CD4-positive, alpha-beta T cell (primary cell): ENCODE measurements at regions of chr10 and their contacts with region 1.

Region 1: GRCh38 chr10:68901104-68901927 is at the start of gene DDX50:
- DNase-seq: peak; percentile 87 to 98 (median 92)
- ATAC-seq: peak; percentile 97
- H3K4me3 ChIP-seq: peak within 1 kb of the TSS; percentile 99
- H3K4me3 Mint-ChIP-seq: peak within 1 kb of the TSS; percentile 99
- H3K27ac ChIP-seq: peak within 1 kb of the TSS; percentile 100
- H3K27ac Mint-ChIP-seq: peak within 1 kb of the TSS; percentile 100
- H3K4me1 ChIP-seq: peaks cover 41% of the 10 kb centered on the region
- H3K4me1 Mint-ChIP-seq: peaks cover 61% of the 10 kb centered on the region
- H3K27me3 ChIP-seq: no peaks in the 10 kb centered on the region
- H3K27me3 Mint-ChIP-seq: no peaks in the 10 kb centered on the region
- CTCF ChIP-seq: no peak
- total RNA-seq, gene DDX50: 46.8 to 47.5 TPM

Region 2: DNA sequence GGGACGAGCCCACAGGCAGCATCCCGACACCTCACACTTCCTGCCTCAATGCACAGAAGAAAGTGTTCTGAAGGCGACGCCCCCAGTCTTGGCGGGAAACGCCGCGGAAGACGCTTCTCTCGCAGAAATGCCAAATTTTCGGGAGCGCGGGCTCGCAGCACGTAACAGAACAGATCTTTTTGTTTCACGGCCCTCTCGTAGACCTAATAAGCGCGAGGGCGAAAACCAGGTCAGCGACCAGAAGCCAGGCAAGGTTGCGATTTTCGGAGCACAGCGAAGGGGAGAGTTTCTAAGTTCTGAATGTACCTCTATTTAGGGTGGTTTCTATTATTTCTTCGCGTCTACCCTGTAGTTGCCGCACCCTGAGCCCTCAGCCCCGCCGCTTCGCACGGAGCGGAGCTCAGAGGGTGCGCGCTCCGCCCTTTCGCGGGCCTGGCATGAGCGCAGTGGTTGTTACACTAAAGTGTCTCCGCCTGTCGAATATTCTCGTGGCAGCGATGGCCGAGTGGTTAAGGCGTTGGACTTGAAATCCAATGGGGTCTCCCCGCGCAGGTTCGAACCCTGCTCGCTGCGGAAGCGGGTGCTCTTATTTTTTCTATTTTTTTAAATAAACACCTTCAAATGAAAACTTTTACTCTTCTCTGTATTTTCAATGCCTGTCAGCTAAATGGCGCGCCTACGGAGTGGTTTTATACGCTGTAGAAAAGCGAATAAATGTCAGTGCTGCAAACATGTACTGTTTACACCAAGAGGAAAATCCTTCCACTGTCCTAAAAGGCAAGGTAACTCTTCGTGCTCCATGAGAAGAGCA is 1137.1 kb before region 1 on chr10:
- CTCF ChIA-PET with region 1: no interaction called
- POLR2A ChIA-PET with region 1: no interaction called
- intact Hi-C with region 1: loop called in 1 of 2 experiments (anchors 10 kb)
- DNase-seq: peak; percentile 94 to 100 (median 97)
- ATAC-seq: peak; percentile 80
- H3K4me3 ChIP-seq: peak overlapping the region; percentile 86
- H3K4me3 Mint-ChIP-seq: peak overlapping the region; percentile 95
- H3K27ac ChIP-seq: peak overlapping the region; percentile 88 to 91
- H3K27ac Mint-ChIP-seq: peak overlapping the region; percentile 100
- H3K4me1 ChIP-seq: peaks cover 10% of the 10 kb centered on the region
- H3K4me1 Mint-ChIP-seq: peaks cover 27% of the 10 kb centered on the region
- H3K27me3 ChIP-seq: no peaks in the 10 kb centered on the region
- H3K27me3 Mint-ChIP-seq: peaks cover 17% of the 10 kb centered on the region
- CTCF ChIP-seq: no peak

Region 3: GRCh38 chr10:68208424-68209042 is 692.8 kb before region 1 on chr10:
- CTCF ChIA-PET with region 1: no interaction called
- POLR2A ChIA-PET with region 1: no interaction called
- intact Hi-C with region 1: loop called in 1 of 2 experiments (anchors 2 kb)
- DNase-seq: peak in 2 of 14 experiments; percentile 11 to 22
- ATAC-seq: no peak
- H3K4me3 ChIP-seq: no peak overlapping the region
- H3K4me3 Mint-ChIP-seq: no peak overlapping the region
- H3K27ac ChIP-seq: no peak overlapping the region
- H3K27ac Mint-ChIP-seq: no peak overlapping the region
- H3K4me1 ChIP-seq: no peaks in the 10 kb centered on the region
- H3K4me1 Mint-ChIP-seq: no peaks in the 10 kb centered on the region
- H3K27me3 ChIP-seq: peaks cover 0 to 9% of the 10 kb centered on the region in 2 experiments
- H3K27me3 Mint-ChIP-seq: peaks cover 25% of the 10 kb centered on the region
- CTCF ChIP-seq: no peak

Region 4: GRCh38 chr10:68526626-68527307 is 374.5 kb before region 1 on chr10:
- CTCF ChIA-PET with region 1: no interaction called
- POLR2A ChIA-PET with region 1: no interaction called
- intact Hi-C with region 1: loop called in 1 of 2 experiments (anchors 10 kb)
- DNase-seq: no peak
- ATAC-seq: peak; percentile 10
- H3K4me3 ChIP-seq: peak overlapping the region; percentile 68
- H3K4me3 Mint-ChIP-seq: peak overlapping the region; percentile 88
- H3K27ac ChIP-seq: peak overlapping the region; percentile 82 to 90
- H3K27ac Mint-ChIP-seq: peak overlapping the region; percentile 96
- H3K4me1 ChIP-seq: peaks cover 16% of the 10 kb centered on the region
- H3K4me1 Mint-ChIP-seq: peaks cover 13% of the 10 kb centered on the region
- H3K27me3 ChIP-seq: no peaks in the 10 kb centered on the region
- H3K27me3 Mint-ChIP-seq: no peaks in the 10 kb centered on the region
- CTCF ChIP-seq: no peak

Region 5: GRCh38 chr10:68792115-68792514 is 109.2 kb before region 1 on chr10:
- CTCF ChIA-PET with region 1: no interaction called
- POLR2A ChIA-PET with region 1: no interaction called
- intact Hi-C with region 1: loop called in 1 of 2 experiments (anchors 1 kb)
- DNase-seq: peak in 1 of 14 experiments; percentile 9
- ATAC-seq: no peak
- H3K4me3 ChIP-seq: no peak overlapping the region
- H3K4me3 Mint-ChIP-seq: no peak overlapping the region
- H3K27ac ChIP-seq: no peak overlapping the region
- H3K27ac Mint-ChIP-seq: no peak overlapping the region
- H3K4me1 ChIP-seq: no peaks in the 10 kb centered on the region
- H3K4me1 Mint-ChIP-seq: no peaks in the 10 kb centered on the region
- H3K27me3 ChIP-seq: no peaks in the 10 kb centered on the region
- H3K27me3 Mint-ChIP-seq: no peaks in the 10 kb centered on the region
- CTCF ChIP-seq: no peak

Region 6: DNA sequence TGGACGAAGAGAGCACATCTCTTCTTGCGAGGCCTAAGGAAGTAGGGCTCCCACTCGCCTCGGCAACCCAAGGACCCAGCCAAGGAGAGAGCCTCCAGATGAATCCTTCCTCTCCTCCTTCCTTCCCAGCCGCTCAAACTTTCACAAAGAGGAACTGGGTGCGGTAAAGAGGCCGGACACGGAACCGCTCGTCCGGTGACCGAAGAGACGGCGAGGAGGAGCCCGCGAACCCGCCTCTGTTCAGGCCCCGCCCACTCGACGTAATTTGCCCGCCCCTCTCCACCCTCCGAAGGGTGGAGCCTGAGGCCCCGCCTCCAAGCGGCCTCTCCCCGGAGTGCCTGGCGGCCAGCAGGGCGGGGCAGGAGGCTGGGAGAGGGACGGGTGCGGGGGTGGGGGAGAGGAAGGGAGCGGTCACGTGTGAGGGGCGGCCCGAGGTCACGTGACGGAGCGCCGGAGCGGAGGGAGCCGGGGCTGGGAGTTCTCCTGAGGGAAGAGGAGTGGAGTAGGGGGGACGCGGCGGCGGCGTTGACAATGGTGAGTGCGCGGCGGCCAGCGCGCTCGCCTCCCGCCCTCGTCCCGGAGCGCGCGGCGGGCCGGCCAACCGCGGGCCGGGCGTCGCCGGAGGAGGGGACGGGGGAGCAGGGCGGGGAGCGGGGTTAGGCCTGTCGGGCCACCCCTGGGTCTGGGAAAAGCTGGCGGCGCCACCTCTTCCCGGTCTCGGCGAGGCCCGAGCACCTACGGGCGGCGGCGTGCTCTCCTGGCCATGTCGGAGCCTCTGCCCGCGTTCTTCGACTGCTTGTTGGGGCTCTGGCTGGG is 222.6 kb after region 1 on chr10 and contains the start of gene VPS26A:
- CTCF ChIA-PET with region 1: no interaction called
- POLR2A ChIA-PET with region 1: interaction called, 3 read pairs
- intact Hi-C with region 1: loop called in 1 of 2 experiments (anchors 5 kb)
- DNase-seq: peak; percentile 97 to 99 (median 98)
- ATAC-seq: peak; percentile 94
- H3K4me3 ChIP-seq: peak within 1 kb of the TSS; percentile 90
- H3K4me3 Mint-ChIP-seq: peak within 1 kb of the TSS; percentile 97
- H3K27ac ChIP-seq: peak within 1 kb of the TSS; percentile 92 to 95
- H3K27ac Mint-ChIP-seq: peak within 1 kb of the TSS; percentile 98
- H3K4me1 ChIP-seq: peaks cover 35% of the 10 kb centered on the region
- H3K4me1 Mint-ChIP-seq: peaks cover 27% of the 10 kb centered on the region
- H3K27me3 ChIP-seq: no peaks in the 10 kb centered on the region
- H3K27me3 Mint-ChIP-seq: no peaks in the 10 kb centered on the region
- CTCF ChIP-seq: peak; percentile 48
- total RNA-seq, gene VPS26A: 32.8 to 33.0 TPM

Region 7: GRCh38 chr10:69506834-69507721 is 605.8 kb after region 1 on chr10:
- CTCF ChIA-PET with region 1: no interaction called
- POLR2A ChIA-PET with region 1: no interaction called
- intact Hi-C with region 1: no loop called
- DNase-seq: peak in 3 of 14 experiments; percentile 53 to 71 (median 65)
- ATAC-seq: peak; percentile 20
- H3K4me3 ChIP-seq: peak overlapping the region; percentile 22
- H3K4me3 Mint-ChIP-seq: peak overlapping the region; percentile 46
- H3K27ac ChIP-seq: peak overlapping the region; percentile 19 to 59
- H3K27ac Mint-ChIP-seq: peak overlapping the region; percentile 85
- H3K4me1 ChIP-seq: peaks cover 18% of the 10 kb centered on the region
- H3K4me1 Mint-ChIP-seq: peaks cover 11% of the 10 kb centered on the region
- H3K27me3 ChIP-seq: no peaks in the 10 kb centered on the region
- H3K27me3 Mint-ChIP-seq: peaks cover 3% of the 10 kb centered on the region
- CTCF ChIP-seq: no peak